ENCODE measurements at regions of chr7 and their contacts with region 1.

Region 1: GRCh38 chr7:4610768-4611467 is 71.2 kb upstream of the FOXK1 start:
- DNase-seq: no peak
- H3K4me3 ChIP-seq: no peak overlapping the region
- H3K27ac ChIP-seq: no peak overlapping the region
- H3K4me1 ChIP-seq: peaks cover 6 to 25% (median 9%) of the 10 kb centered on the region in 4 donors
- H3K27me3 ChIP-seq: peaks cover 0 to 2% (median 0%) of the 10 kb centered on the region in 4 donors
- CTCF ChIP-seq: peak; percentile 82 to 88 (median 83)
- EP300 ChIP-seq: no peak
- POLR2A ChIP-seq: no peak

Region 2: GRCh38 chr7:4621401-4622145 is 10.7 kb after region 1 on chr7:
- intact Hi-C with region 1: loop called (anchors 1 kb)
- DNase-seq: no peak
- H3K4me3 ChIP-seq: no peak overlapping the region
- H3K27ac ChIP-seq: no peak overlapping the region
- H3K4me1 ChIP-seq: peaks cover 5 to 27% (median 10%) of the 10 kb centered on the region in 4 donors
- H3K27me3 ChIP-seq: no peaks in the 10 kb centered on the region
- CTCF ChIP-seq: no peak
- EP300 ChIP-seq: no peak
- POLR2A ChIP-seq: no peak

Region 3: DNA sequence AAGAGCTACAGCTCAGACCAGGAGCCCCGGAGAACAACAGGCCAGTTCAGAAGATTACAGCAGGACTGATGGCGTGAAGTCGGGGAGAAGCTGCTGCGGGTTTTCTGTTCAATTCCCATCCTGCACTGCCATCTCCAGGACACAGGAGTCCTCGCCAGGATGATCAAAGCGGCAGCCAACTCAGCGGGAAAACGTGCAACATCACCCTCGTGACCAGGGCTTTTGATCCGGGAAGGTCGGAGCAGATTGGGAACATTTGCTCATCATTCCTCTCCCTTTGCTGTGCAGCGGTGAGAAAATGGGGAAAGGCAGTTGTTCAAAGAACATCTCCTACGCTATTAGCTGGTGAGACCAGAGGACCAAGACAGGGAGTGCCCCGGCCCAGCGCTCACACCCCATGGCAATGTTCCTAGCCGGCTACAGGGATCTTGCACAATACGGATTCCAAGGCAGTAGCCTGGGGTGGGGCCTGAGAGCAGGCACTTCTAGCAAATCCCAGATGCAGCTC is 20.8 kb after region 1 on chr7:
- intact Hi-C with region 1: loop called (anchors 2 kb)
- DNase-seq: peak; percentile 95
- H3K4me3 ChIP-seq: peak overlapping the region; percentile 35 to 56 (median 43)
- H3K27ac ChIP-seq: peak overlapping the region; percentile 36 to 77 (median 67)
- H3K4me1 ChIP-seq: peaks cover 12 to 16% (median 15%) of the 10 kb centered on the region in 4 donors
- H3K27me3 ChIP-seq: peaks cover 0 to 9% (median 0%) of the 10 kb centered on the region in 4 donors
- CTCF ChIP-seq: peak; percentile 73 to 85 (median 78)
- EP300 ChIP-seq: no peak
- POLR2A ChIP-seq: no peak